ENCODE measurements at regions of chr10 and their contacts with region 1.

Region 1: DNA sequence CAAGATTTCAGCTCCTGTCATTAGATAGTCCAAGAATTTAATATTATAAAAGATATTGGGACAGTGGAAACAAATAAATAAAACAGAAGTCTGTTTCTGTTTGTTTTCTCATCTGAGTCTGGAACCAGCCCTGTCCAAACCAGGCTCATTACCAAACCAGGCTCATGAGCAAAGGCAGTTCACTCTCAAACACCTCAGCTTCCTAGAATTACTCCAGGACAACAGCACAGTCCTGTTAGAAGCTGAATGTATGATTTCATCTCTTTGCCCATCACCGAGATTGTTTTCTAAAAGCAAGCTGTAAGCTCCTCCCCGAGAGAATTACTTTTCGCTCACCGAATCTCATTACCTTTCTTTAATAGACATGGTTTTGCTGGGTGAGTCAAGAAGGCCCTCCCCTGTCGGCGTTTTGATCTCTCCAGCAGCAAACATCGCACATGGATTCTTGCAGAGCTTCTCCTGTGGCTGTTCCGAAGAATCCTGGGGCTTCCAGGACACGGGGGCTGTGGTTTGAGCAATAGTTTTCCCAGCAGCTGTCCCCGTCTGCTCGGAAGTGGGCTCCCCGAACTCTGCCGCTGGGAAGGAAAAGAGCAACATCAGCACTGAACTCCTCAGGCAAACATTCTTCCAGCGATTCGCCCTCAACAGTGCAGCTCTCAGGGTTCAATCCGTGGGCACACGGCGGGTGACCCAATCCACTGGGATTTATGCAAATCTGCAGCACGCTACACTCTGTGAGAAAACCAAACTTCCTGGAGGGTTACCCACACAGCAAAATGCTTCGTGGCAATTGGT is 112.5 kb downstream of the SVIL start:
- DNase-seq: no peak
- ATAC-seq: peak in 3 of 8 donors; percentile 18 to 52 (median 23)
- H3K4me3 ChIP-seq: peak overlapping the region in 1 of 10 donors; percentile 27
- H3K27ac ChIP-seq: peak overlapping the region in 6 of 10 donors; percentile 14 to 53 (median 32)
- H3K4me1 ChIP-seq: peaks cover 0 to 26% (median 7%) of the 10 kb centered on the region in 9 donors
- H3K27me3 ChIP-seq: no peaks in the 10 kb centered on the region
- CTCF ChIP-seq: no peak

Region 2: DNA sequence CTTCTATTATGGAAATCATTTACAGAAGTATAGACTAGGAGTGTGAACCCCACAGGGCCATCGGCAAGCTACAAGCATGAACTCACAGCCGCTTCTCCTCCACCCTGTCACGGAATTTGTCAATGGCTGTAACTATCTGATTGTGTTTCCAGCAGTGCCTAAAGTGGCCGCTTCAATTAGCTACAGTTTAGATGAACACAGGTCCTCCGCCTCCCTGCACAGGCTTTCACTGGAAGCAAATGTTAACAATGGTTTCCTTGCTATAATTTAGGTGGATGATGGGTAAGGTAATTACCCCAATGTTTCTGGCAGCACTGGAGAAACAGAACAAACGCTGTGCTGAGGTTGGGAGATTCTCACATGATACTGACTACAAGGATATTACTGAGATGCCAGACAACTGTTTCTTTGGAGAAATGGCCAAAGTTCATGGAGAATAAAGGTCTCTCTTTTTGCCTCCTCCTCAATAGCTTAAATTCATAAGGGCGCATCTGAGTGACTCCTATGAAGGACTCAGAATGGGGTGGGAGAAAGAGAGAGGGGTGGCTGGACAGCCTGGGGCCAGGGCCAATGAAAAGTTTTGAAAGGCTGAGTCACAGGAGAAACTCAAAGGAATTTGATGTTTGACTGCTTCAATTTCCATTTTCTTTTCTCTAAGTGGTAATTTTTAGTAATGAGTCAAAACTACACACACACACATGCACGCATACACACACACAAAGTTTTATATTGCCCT is 33.7 kb after region 1 on chr10:
- intact Hi-C with region 1: no loop called
- DNase-seq: no peak
- ATAC-seq: peak in 6 of 8 donors; percentile 20 to 55 (median 30)
- H3K4me3 ChIP-seq: no peak overlapping the region
- H3K27ac ChIP-seq: peak overlapping the region in 5 of 10 donors; percentile 1 to 61 (median 24)
- H3K4me1 ChIP-seq: peaks cover 2 to 35% (median 18%) of the 10 kb centered on the region in 9 donors
- H3K27me3 ChIP-seq: no peaks in the 10 kb centered on the region
- CTCF ChIP-seq: no peak

Region 3: GRCh38 chr10:29585488-29585980 is 63.3 kb after region 1 on chr10:
- intact Hi-C with region 1: loop called in 1 of 10 experiments (anchors 10 kb)
- DNase-seq: no peak
- ATAC-seq: peak in 7 of 8 donors; percentile 16 to 36 (median 19)
- H3K4me3 ChIP-seq: no peak overlapping the region
- H3K27ac ChIP-seq: peak overlapping the region in 7 of 10 donors; percentile 15 to 84 (median 74)
- H3K4me1 ChIP-seq: peaks cover 14 to 78% (median 51%) of the 10 kb centered on the region in 9 donors
- H3K27me3 ChIP-seq: no peaks in the 10 kb centered on the region
- CTCF ChIP-seq: peak in 2 of 9 donors; percentile 14 to 15

Measured in heart right ventricle (tissue), 16 donors.